Dendritic cell treated with granulocyte-macrophage colony-stimulating factor and Interleukin-4, amounts not matched to agents 40 ng/mL and 50 ng/mL, for 4 days (primary cell): ENCODE measurements at regions of chr15 and their contacts with region 1.

Region 1: DNA sequence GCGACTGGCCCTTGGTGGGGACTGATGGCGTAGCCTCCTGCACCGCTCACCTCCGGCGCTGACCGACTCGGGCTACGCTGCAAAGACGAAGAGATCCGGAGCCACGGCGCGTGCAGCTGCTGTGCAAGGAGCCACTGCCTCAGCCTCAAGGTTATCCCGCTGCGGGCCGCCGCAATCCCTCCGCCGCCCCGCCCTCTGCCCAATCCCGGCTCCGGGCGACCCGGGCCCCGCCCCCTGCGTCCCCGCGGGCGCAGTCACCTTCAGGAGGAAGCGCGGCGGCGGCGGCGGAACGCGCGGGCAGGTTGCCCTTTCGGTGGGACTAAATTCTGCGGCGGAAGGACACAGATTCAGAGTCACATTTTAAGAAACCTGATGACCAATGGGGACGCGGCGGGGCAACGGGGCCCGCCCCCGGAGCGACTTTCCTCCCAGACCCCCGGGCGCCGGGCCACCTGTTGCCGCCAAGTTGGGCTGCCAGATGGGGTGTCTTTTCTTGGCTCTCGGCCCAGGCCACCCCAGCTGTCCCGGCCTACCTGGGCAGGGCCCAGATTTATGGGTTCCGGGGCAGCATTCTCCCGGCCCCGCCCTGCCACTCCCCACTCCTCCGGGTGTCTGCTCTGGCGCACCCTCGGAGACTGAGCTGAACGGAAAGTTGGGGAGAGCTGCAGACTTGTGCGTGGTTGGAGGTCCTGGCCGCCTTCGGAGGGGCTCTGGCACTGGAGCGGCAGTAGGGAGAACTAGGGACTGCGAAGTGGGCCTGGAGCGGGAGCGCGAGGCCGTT is at the start of gene PKM:
- H3K4me3 Mint-ChIP-seq: peak within 1 kb of the TSS; percentile 93
- H3K27ac Mint-ChIP-seq: peak within 1 kb of the TSS; percentile 98
- H3K4me1 Mint-ChIP-seq: peaks cover 67% of the 10 kb centered on the region
- H3K27me3 Mint-ChIP-seq: no peaks in the 10 kb centered on the region

Region 2: GRCh38 chr15:72199711-72200212 is 31.5 kb before region 1 on chr15:
- intact Hi-C with region 1: loop called (anchors 5 kb)
- H3K4me3 Mint-ChIP-seq: no peak overlapping the region
- H3K27ac Mint-ChIP-seq: no peak overlapping the region
- H3K4me1 Mint-ChIP-seq: peaks cover 55% of the 10 kb centered on the region
- H3K27me3 Mint-ChIP-seq: peaks cover 36% of the 10 kb centered on the region

Region 3: GRCh38 chr15:72272213-72273002 is 41.2 kb after region 1 on chr15 and contains the start of gene PARP6:
- intact Hi-C with region 1: loop called (anchors 1 kb)
- H3K4me3 Mint-ChIP-seq: peak within 1 kb of the TSS; percentile 85
- H3K27ac Mint-ChIP-seq: peak within 1 kb of the TSS; percentile 83
- H3K4me1 Mint-ChIP-seq: peaks cover 35% of the 10 kb centered on the region
- H3K27me3 Mint-ChIP-seq: peaks cover 8% of the 10 kb centered on the region

Region 4: GRCh38 chr15:72331021-72331420 is 99.8 kb after region 1 on chr15:
- intact Hi-C with region 1: no loop called
- H3K4me3 Mint-ChIP-seq: no peak overlapping the region
- H3K27ac Mint-ChIP-seq: no peak overlapping the region
- H3K4me1 Mint-ChIP-seq: no peaks in the 10 kb centered on the region
- H3K27me3 Mint-ChIP-seq: no peaks in the 10 kb centered on the region

Region 5: GRCh38 chr15:72375847-72376581 is 144.8 kb after region 1 on chr15 and contains the start of gene HEXA:
- intact Hi-C with region 1: loop called (anchors 5 kb)
- H3K4me3 Mint-ChIP-seq: peak within 1 kb of the TSS; percentile 99
- H3K27ac Mint-ChIP-seq: peak within 1 kb of the TSS; percentile 99
- H3K4me1 Mint-ChIP-seq: peaks cover 58% of the 10 kb centered on the region
- H3K27me3 Mint-ChIP-seq: no peaks in the 10 kb centered on the region

Region 6: DNA sequence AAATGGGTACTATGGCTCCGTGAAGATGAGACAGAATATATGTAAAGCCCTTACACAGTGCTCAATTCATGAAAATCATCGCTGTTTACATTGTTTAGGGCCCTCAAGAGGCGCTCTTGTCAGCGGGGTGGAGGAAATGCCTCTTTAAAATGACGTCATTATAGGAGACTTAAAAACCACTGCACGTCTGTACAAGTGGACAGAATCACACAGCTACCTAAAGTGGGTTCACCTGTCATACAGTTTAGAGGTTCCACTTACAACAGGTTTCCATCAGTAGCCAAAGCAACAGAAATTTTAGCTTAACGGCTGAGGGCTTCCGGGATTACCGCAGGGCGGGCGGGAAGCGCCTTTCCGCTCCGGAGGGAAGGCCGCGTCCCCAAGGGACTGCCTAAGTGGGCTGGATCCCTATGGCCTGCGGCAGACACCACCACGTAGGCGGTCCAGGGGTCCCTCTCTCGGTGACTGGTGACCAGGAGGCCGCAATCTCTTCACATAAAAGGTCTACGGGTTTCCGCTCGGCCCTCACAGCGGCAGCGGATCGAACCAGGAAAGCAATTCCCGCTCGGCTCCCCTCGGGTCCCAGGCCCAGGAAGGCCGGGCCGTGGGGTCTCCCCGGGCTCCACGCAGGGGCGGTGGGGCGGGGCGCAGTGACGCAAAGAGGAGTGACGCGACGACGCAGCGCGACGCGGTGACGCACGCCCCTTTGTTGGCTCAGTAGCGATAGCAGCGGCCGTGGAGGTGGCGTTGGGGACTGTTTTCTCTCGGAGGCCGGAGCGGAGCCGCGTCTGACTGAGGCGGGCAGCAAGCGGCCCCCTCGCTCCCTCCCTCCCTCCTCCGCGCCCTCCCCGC is 242.6 kb after region 1 on chr15 and contains the start of gene ARIH1:
- intact Hi-C with region 1: loop called (anchors 10 kb)
- H3K4me3 Mint-ChIP-seq: peak within 1 kb of the TSS; percentile 96
- H3K27ac Mint-ChIP-seq: peak within 1 kb of the TSS; percentile 99
- H3K4me1 Mint-ChIP-seq: peaks cover 40% of the 10 kb centered on the region
- H3K27me3 Mint-ChIP-seq: no peaks in the 10 kb centered on the region